ENCODE measurements at regions of chr10 and their contacts with region 1.

Region 1: GRCh38 chr10:93496322-93497041 is at the start of gene CEP55:
- DNase-seq: peak; percentile 74 to 96
- H3K4me3 ChIP-seq: peak within 1 kb of the TSS; percentile 72 to 86
- H3K27ac ChIP-seq: peak within 1 kb of the TSS; percentile 60 to 62
- H3K4me1 ChIP-seq: peaks cover 2 to 5% of the 10 kb centered on the region in 2 donors
- H3K27me3 ChIP-seq: no peaks in the 10 kb centered on the region
- CTCF ChIP-seq: no peak
- total RNA-seq, gene CEP55: not detected

Region 2: GRCh38 chr10:93245779-93246178 is 250.7 kb before region 1 on chr10:
- intact Hi-C with region 1: no loop called
- DNase-seq: no peak
- H3K4me3 ChIP-seq: no peak overlapping the region
- H3K27ac ChIP-seq: no peak overlapping the region
- H3K4me1 ChIP-seq: no peaks in the 10 kb centered on the region
- H3K27me3 ChIP-seq: no peaks in the 10 kb centered on the region
- CTCF ChIP-seq: no peak

Region 3: DNA sequence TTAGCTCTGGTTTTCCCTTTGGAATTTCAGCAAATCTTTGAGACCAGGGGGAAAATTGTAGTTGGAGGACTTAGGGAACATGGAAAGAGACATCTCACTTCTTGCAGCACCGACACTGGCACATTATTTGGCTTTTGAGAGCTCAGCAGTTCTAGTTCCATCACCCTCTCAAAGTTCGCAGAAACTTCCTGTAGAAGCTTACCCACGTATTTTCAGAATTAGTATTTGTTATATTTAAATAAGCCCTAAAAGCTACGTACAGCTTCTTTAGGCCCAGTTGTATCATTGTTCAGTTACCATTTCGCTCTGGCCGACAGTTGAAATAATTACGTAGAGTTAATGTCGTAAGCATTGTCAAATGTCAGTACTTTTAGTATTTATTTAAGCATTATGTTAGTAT is 13.3 kb after region 1 on chr10:
- intact Hi-C with region 1: loop called (anchors 2 kb)
- DNase-seq: no peak
- H3K4me3 ChIP-seq: no peak overlapping the region
- H3K27ac ChIP-seq: no peak overlapping the region
- H3K4me1 ChIP-seq: peaks cover 4 to 8% of the 10 kb centered on the region in 2 donors
- H3K27me3 ChIP-seq: no peaks in the 10 kb centered on the region
- CTCF ChIP-seq: no peak